Mammary epithelial cell (primary cell): ENCODE measurements at regions of chr2 and their contacts with region 1.

Region 1: GRCh38 chr2:209960676-209961630 is 41.5 kb upstream of the RPE start:
- DNase-seq: peak; percentile 19
- H3K4me3 ChIP-seq: no peak overlapping the region
- H3K27ac ChIP-seq: no peak overlapping the region
- H3K4me1 ChIP-seq: no peaks in the 10 kb centered on the region
- H3K27me3 ChIP-seq: peaks cover 2% of the 10 kb centered on the region
- CTCF ChIP-seq: peak; percentile 76 to 79

Region 2: GRCh38 chr2:208392300-208393080 is 1568.5 kb before region 1 on chr2:
- CTCF ChIA-PET with region 1: no interaction called
- dilution Hi-C with region 1: no loop called
- in situ Hi-C with region 1: no loop called
- intact Hi-C with region 1: loop called (anchors 10 kb)
- DNase-seq: no peak
- H3K4me3 ChIP-seq: no peak overlapping the region
- H3K27ac ChIP-seq: no peak overlapping the region
- H3K4me1 ChIP-seq: no peaks in the 10 kb centered on the region
- H3K27me3 ChIP-seq: no peaks in the 10 kb centered on the region
- CTCF ChIP-seq: peak; percentile 17 to 20

Region 3: DNA sequence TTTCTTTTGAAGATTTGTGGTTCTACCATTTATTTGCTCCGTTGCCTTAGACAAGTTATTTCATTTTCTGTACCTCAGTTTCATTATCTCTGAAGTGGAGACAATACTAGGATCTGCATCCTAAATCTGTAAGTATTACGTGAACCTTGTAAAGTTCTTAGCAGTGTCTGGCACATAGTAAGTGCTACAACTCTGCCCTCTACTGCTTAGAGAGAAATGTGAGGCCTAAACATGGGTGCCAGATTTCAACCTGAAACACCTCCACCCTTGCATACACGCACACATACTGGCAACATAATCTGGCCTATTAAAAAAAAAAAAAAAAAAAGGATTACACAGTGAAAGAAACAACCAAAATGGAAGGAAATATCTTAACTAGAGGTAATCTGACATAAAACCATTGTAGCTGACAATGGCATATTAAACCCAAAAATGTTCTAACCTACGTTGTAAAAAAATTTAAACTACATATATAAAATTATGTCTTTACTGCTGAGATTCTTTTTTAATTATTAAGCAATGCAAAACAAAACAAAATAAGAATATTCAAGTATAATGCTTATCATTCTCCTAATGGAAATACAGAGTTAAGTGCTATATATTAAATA is 404.5 kb before region 1 on chr2:
- CTCF ChIA-PET with region 1: no interaction called
- dilution Hi-C with region 1: no loop called
- in situ Hi-C with region 1: no loop called
- intact Hi-C with region 1: loop called (anchors 5 kb)
- DNase-seq: peak; percentile 40
- H3K4me3 ChIP-seq: no peak overlapping the region
- H3K27ac ChIP-seq: no peak overlapping the region
- H3K4me1 ChIP-seq: no peaks in the 10 kb centered on the region
- H3K27me3 ChIP-seq: no peaks in the 10 kb centered on the region
- CTCF ChIP-seq: peak; percentile 42 to 74

Region 4: GRCh38 chr2:209577376-209578357 is 383.3 kb before region 1 on chr2:
- CTCF ChIA-PET with region 1: no interaction called
- dilution Hi-C with region 1: no loop called
- in situ Hi-C with region 1: no loop called
- intact Hi-C with region 1: loop called (anchors 1 kb)
- DNase-seq: no peak
- H3K4me3 ChIP-seq: no peak overlapping the region
- H3K27ac ChIP-seq: no peak overlapping the region
- H3K4me1 ChIP-seq: no peaks in the 10 kb centered on the region
- H3K27me3 ChIP-seq: no peaks in the 10 kb centered on the region
- CTCF ChIP-seq: peak; percentile 32 to 41

Region 5: GRCh38 chr2:209913786-209914345 is 47.1 kb before region 1 on chr2:
- CTCF ChIA-PET with region 1: no interaction called
- dilution Hi-C with region 1: no loop called
- in situ Hi-C with region 1: no loop called
- intact Hi-C with region 1: no loop called
- DNase-seq: no peak
- H3K4me3 ChIP-seq: no peak overlapping the region
- H3K27ac ChIP-seq: no peak overlapping the region
- H3K4me1 ChIP-seq: no peaks in the 10 kb centered on the region
- H3K27me3 ChIP-seq: no peaks in the 10 kb centered on the region
- CTCF ChIP-seq: no peak